Activated CD4-positive, alpha-beta memory T cell treated with anti-CD3 and anti-CD28 coated beads, Interleukin-2, amount 10 ng/mL, durations not matched to agents 7 days and 5 days (primary cell): ENCODE measurements at regions of chr5 and their contacts with region 1.

Region 1: GRCh38 chr5:5421961-5422818 is at the start of gene ICE1:
- DNase-seq: peak; percentile 95
- H3K4me3 Mint-ChIP-seq: peak within 1 kb of the TSS; percentile 95
- H3K27ac Mint-ChIP-seq: peak within 1 kb of the TSS; percentile 91
- H3K4me1 Mint-ChIP-seq: peaks cover 28% of the 10 kb centered on the region
- H3K27me3 Mint-ChIP-seq: no peaks in the 10 kb centered on the region
- total RNA-seq, gene ICE1: 23.4 to 24.4 TPM

Region 2: DNA sequence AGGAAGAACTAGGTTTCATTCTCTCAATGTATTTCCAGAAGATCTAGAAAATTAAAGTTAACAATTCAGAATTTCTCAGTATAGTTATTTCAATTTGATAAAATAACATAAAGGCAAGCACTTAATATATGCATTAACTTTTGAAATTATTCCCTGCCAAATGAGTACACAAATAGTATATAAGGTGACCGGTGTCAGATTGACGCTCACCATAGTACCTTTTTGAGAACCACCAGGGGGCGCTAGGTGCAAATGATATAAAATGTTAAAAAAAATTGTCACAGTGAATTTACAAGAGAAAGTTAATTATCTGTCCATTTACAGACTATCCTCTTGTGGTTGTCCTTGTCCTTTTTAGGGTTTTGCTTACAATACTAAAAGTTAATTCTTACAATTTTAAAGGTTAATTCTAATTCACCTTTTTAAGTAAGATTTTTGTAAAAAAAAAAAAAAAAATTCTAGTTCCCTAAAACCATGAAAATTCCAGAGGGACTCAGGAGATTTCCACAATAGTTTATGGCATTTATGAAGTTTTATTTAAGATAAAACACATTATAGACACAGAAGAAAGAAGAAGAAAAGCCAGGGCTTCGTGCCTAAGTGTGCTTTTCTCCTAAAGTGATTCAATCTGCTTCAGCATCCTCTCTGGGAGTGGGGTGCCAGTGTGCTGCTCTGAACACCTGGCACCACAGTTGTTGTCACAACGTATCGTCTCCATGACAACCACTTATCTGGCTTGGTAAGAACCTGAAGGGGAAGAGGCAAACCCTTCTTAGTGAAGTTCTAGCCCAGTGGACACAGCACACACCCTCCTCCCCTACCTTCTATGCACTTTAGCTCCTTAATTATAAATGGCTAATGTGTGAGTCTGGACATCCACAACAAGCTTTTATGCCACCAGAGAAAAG is 280.3 kb before region 1 on chr5:
- CTCF ChIA-PET with region 1: interaction called, 15 read pairs
- POLR2A ChIA-PET with region 1: no interaction called
- DNase-seq: peak; percentile 50
- H3K4me3 Mint-ChIP-seq: no peak overlapping the region
- H3K27ac Mint-ChIP-seq: no peak overlapping the region
- H3K4me1 Mint-ChIP-seq: peaks cover 2% of the 10 kb centered on the region
- H3K27me3 Mint-ChIP-seq: peaks cover 20% of the 10 kb centered on the region

Region 3: DNA sequence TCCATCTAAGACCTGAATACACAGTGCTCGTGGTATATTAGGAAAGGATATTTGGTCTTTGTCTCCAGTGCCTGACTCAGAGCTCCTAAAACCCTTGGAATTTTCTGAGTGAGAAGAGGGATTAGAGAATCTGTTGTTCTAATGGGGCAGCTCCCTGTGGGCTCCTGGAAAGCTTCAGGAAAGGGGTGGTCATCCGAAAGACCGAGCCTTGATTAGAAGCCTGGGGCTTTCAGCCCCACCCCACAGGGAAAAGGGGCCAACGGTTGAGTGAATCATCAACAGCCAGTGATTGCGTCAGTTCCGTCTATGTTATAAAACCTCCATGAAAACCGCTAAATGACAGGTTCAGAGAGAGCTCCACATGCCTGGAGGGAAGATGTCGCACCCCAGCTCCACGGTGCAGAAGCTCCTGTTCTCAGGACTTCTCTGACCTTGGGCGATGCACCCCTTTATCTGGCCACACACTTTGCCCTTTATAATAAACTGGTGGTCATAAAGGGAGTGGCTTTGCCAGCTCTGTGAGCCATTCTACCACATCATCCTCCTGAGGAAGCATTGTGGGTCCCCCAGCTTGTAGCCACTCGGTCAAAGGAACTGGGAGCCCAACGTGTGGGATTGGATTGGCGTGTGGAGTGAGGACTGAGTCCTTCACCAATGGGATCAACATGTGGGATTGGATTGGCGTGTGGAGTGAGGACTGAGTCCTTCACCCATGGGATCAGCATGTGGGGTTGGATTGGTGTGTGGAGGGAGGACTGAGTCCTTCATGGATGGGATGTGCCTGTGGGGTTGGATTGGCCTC is 70.7 kb before region 1 on chr5:
- CTCF ChIA-PET with region 1: no interaction called
- POLR2A ChIA-PET with region 1: no interaction called
- DNase-seq: no peak
- H3K4me3 Mint-ChIP-seq: no peak overlapping the region
- H3K27ac Mint-ChIP-seq: no peak overlapping the region
- H3K4me1 Mint-ChIP-seq: peaks cover 7% of the 10 kb centered on the region
- H3K27me3 Mint-ChIP-seq: no peaks in the 10 kb centered on the region

Region 4: GRCh38 chr5:5437227-5438172 is 15.3 kb after region 1 on chr5:
- CTCF ChIA-PET with region 1: interaction called, 5 read pairs
- POLR2A ChIA-PET with region 1: interaction called, 16 read pairs
- DNase-seq: no peak
- H3K4me3 Mint-ChIP-seq: no peak overlapping the region
- H3K27ac Mint-ChIP-seq: peak overlapping the region; percentile 50
- H3K4me1 Mint-ChIP-seq: peaks cover 19% of the 10 kb centered on the region
- H3K27me3 Mint-ChIP-seq: no peaks in the 10 kb centered on the region